ENCODE measurements at regions of chr12 and their contacts with region 1.

Region 1: DNA sequence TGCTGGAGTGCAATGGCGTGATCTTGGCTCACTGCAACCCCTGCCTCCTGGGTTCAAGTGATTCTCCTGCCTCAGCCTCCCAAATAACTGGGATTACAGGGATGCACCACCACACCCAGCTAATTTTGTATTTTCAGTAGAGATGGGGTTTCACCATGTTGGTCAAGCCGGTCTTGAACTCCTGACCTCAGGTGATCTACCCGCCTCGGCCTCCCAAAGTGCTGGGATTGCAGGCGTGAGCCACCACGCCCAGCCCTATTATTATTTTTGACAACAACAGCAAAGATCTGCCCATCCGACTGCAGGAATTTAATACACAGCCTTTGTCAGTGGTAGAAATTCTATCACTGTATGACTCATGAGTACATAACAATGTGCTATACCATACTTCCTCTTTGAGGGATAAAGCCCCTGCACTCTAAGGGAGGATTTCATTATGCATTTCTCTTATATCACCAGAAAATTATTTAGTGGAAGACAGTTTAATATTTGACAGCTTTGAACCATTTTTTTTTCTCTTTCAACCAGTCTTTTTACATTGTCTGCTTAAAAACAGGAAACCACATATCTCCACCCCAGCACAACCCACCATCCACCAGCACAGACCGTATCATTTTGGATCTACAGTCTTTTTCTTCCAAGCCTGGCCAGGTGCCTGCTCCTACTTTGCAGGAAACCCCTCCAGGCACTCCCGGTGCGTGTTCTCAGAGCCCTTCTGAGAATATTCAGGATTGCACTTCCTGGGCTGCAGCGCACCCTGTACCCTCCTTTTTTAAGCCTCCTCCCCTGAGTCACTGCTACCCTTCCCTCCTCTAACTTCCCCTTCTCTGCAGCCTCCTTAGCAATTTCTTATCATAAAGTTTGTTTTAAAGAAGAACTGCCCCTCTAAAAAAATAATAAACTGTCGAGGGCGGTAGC is 594 bp downstream of the ARHGDIB start:
- DNase-seq: peak; percentile 41
- ATAC-seq: peak; percentile 59
- H3K4me3 Mint-ChIP-seq: peak overlapping the region; percentile 96
- H3K27ac Mint-ChIP-seq: peak overlapping the region; percentile 98
- H3K4me1 Mint-ChIP-seq: peaks cover 78% of the 10 kb centered on the region
- H3K27me3 Mint-ChIP-seq: no peaks in the 10 kb centered on the region
- CTCF ChIP-seq: no peak

Region 2: DNA sequence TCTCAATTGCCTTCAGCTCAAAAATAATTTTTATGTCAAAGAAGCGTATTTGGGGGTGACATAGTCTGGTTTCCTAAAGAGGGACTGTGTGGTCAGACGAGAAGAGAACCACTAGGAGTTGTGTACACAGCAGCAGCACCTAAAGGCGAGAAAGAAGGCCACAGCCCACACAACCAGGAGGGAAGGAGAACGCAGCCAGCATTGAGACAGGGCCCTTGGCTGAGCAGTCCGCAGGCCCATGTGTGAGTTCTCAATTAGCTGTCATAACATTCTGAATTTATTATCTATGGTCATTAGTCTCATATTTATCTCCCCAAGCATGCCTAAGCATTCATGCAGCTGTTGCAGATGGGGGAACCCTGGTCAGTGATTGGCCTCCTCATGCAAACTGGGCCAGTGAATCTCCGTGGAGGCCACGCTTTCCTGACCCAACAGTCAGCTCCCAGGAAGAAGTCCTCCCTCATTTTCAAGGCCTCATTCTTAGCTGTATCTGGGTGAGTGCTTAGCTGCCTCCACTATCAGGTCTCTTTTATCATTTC is 676.6 kb before region 1 on chr12:
- CTCF ChIA-PET with region 1: no interaction called
- POLR2A ChIA-PET with region 1: no interaction called
- intact Hi-C with region 1: loop called (anchors 5 kb)
- DNase-seq: no peak
- ATAC-seq: peak; percentile 36
- H3K4me3 Mint-ChIP-seq: peak overlapping the region; percentile 67
- H3K27ac Mint-ChIP-seq: peak overlapping the region; percentile 96
- H3K4me1 Mint-ChIP-seq: peaks cover 46% of the 10 kb centered on the region
- H3K27me3 Mint-ChIP-seq: no peaks in the 10 kb centered on the region
- CTCF ChIP-seq: no peak

Region 3: DNA sequence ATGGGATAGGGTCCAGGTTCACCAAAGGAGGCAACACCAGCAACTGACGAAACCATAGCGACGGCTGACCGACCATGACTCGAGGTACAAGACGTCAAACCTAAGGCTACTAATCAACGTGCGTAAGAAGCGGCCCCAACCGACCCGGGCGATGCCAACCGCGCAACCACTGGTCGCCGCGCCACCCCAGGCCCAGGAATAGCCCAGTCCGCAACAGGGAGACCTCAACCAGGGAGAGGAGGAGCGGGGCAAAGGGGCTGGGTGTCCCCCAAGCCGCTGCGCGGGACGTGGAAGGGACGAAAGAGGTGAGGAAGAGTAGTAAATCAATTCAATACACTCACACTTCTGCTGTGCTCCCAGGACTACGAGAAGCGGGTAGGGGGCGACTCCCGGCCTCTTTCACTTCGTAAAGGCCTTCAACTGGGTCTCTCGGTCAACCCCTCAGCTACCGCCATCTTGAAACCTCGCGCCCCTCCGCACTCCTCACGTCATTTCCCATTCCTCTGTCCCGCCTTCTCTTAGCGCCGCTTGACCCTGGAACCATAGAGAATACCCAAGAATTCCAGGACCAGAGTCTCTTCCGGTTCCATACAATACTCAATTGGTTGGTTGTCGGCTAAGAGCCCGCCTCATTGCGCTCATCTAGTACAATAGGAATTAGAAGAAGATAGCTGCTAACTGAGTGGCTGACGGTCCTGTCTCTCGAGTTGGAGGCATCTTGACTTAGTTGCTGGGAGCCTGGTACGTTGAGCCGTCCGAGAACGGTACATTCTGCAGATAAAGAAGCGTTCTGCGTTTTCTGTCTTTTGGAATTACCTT is 157.6 kb before region 1 on chr12 and contains the starts of genes C12orf60 and WBP11:
- CTCF ChIA-PET with region 1: no interaction called
- POLR2A ChIA-PET with region 1: interaction called, 7 read pairs
- intact Hi-C with region 1: loop called (anchors 1 kb)
- DNase-seq: peak; percentile 74
- ATAC-seq: peak; percentile 95
- H3K4me3 Mint-ChIP-seq: no peak within 1 kb of the TSS
- H3K27ac Mint-ChIP-seq: no peak within 1 kb of the TSS
- H3K4me1 Mint-ChIP-seq: peaks cover 17% of the 10 kb centered on the region
- H3K27me3 Mint-ChIP-seq: no peaks in the 10 kb centered on the region
- CTCF ChIP-seq: no peak
- total RNA-seq, gene C12orf60: 0.64 and 0.69 TPM in 2 replicates
- total RNA-seq, gene WBP11: 86.3 and 89.4 TPM in 2 replicates

Region 4: DNA sequence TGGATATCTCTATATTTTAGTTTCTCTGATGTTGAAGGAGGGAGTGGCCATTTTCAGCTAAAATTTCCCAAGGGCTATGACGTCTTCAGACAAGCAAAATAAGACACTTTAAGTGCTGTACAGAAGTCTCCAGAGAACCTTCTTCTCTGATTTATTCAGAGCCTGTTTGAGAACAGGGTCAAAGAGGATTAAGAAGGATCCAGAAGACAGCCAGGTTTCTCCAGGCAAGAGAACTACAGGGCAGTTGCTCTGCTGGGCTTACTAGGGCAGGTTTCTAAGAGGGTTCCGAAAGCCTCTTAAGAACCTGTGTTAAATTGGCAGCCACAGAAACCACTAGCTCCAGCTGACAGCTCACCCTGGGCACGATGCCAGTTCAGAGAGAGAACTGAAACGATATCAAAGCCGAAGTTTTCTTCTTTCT is 76.3 kb before region 1 on chr12:
- CTCF ChIA-PET with region 1: no interaction called
- POLR2A ChIA-PET with region 1: interaction called, 3 read pairs
- intact Hi-C with region 1: loop called (anchors 1 kb)
- DNase-seq: peak; percentile 57
- ATAC-seq: peak; percentile 96
- H3K4me3 Mint-ChIP-seq: peak overlapping the region; percentile 66
- H3K27ac Mint-ChIP-seq: peak overlapping the region; percentile 76
- H3K4me1 Mint-ChIP-seq: peaks cover 55% of the 10 kb centered on the region
- H3K27me3 Mint-ChIP-seq: peaks cover 25% of the 10 kb centered on the region
- CTCF ChIP-seq: no peak

Region 5: DNA sequence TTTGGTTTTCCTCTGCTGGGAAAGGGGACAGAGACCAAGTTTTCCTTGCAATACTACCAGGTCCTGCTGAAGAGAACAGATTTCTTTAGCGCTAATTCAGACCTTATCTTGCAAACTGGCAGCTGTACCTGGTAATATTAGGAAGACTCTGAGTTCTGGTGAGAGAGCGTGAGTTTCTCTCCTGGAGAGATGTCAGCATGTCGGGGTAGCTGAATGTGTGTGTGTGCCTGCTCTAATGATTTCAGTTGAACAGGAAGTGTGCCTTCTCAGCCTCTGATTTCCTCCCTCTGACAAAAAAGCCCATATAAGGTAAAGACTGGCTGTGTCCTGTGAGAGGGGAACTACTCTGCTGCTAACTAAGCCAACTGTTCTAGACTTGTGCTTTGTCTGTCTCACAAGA is 12.1 kb before region 1 on chr12:
- CTCF ChIA-PET with region 1: interaction called, 4 read pairs
- POLR2A ChIA-PET with region 1: interaction called, 65 read pairs
- intact Hi-C with region 1: loop called (anchors 1 kb)
- DNase-seq: no peak
- ATAC-seq: peak; percentile 91
- H3K4me3 Mint-ChIP-seq: peak overlapping the region; percentile 71
- H3K27ac Mint-ChIP-seq: peak overlapping the region; percentile 96
- H3K4me1 Mint-ChIP-seq: peaks cover 82% of the 10 kb centered on the region
- H3K27me3 Mint-ChIP-seq: no peaks in the 10 kb centered on the region
- CTCF ChIP-seq: no peak

Region 6: DNA sequence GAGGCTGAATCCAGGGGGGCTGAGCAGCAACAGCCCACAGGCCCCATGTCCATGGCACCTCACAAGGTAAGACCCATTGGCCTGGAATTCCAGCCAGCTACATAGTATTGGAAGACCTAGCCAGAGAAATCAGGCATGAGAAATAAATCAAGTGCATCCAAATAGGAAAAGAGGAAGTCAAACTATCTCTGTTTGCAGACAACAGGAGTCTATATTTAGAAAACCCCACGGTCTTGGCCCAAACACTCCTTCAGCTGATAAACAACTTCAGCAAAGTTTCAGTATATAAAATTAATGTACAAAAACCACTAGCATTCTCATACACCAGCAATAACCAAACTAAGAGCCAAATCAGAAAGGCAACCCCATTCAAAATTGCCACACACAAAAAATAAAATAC is 29.0 kb after region 1 on chr12:
- CTCF ChIA-PET with region 1: interaction called, 3 read pairs
- POLR2A ChIA-PET with region 1: interaction called, 17 read pairs
- intact Hi-C with region 1: loop called (anchors 1 kb)
- DNase-seq: no peak
- ATAC-seq: peak; percentile 35
- H3K4me3 Mint-ChIP-seq: peak overlapping the region; percentile 41
- H3K27ac Mint-ChIP-seq: peak overlapping the region; percentile 72
- H3K4me1 Mint-ChIP-seq: peaks cover 73% of the 10 kb centered on the region
- H3K27me3 Mint-ChIP-seq: no peaks in the 10 kb centered on the region
- CTCF ChIP-seq: no peak

Measured in activated B cell treated with CpG ODN at 0.5 μM for 24 hours (primary cell).